ENCODE measurements at regions of chr4 and their contacts with region 1.

Region 1: DNA sequence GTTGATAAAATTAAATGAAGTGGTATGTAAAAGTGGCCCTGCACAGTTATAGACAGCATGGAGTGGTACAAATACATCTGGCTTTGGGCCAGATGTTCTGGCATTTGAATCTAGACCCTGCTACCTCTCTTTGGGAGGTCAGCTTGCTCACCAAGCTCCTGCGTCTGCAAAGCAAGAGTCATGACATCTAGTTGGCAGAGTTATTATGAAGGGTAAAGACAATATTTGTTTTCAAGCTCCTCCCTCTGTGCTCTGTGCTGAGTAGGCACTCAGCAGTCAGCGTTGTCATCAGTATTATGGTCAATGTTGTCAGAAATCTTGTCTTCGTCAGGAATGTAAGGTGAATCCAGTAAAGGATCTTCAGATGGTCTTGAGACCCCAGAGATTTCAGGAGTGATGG is 55.8 kb downstream of the CCNI start:
- DNase-seq: no peak
- H3K4me3 ChIP-seq: no peak overlapping the region
- H3K27ac ChIP-seq: no peak overlapping the region
- H3K4me1 ChIP-seq: peaks cover 1 to 23% (median 9%) of the 10 kb centered on the region in 4 experiments; a peak in 5 of 7 replicates
- H3K27me3 ChIP-seq: no peaks in the 10 kb centered on the region
- CTCF ChIP-seq: no peak
- EP300 ChIP-seq: no peak
- POLR2A ChIP-seq: no peak
- RAD21 ChIP-seq: no peak

Region 2: DNA sequence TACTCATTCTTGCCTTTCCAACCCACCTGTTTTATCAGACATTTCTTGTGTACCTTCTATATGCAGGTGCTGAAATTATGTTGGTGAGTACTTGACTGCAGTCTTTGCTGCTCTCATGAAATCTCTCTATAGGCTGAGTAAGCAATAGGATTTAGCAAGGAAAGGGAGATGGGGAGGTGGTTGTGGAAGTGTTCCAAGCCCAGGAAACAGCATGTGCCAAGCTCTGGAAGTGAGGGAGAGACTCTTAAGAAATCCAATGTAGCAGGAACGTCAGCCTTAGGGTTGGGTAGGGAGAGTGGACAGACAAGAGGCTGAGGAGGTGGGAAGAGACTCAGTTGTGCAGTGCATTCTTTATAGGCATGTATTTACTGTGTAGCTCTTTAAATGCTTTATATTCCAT is 64.8 kb before region 1 on chr4:
- CTCF ChIA-PET with region 1: no interaction called
- POLR2A ChIA-PET with region 1: no interaction called
- DNase-seq: no peak
- H3K4me3 ChIP-seq: no peak overlapping the region
- H3K27ac ChIP-seq: no peak overlapping the region
- H3K4me1 ChIP-seq: peaks cover 0 to 3% (median 0%) of the 10 kb centered on the region in 4 experiments; a peak in 1 of 7 replicates
- H3K27me3 ChIP-seq: no peaks in the 10 kb centered on the region; a peak in 1 of 7 replicates
- CTCF ChIP-seq: no peak
- EP300 ChIP-seq: no peak
- POLR2A ChIP-seq: no peak
- RAD21 ChIP-seq: no peak

Region 3: GRCh38 chr4:76993787-76994641 is 26.0 kb before region 1 on chr4:
- CTCF ChIA-PET with region 1: no interaction called
- POLR2A ChIA-PET with region 1: no interaction called
- DNase-seq: no peak
- H3K4me3 ChIP-seq: no peak overlapping the region
- H3K27ac ChIP-seq: no peak overlapping the region
- H3K4me1 ChIP-seq: peaks cover 0 to 16% (median 7%) of the 10 kb centered on the region in 4 experiments; a peak in 3 of 7 replicates
- H3K27me3 ChIP-seq: no peaks in the 10 kb centered on the region
- CTCF ChIP-seq: no peak
- EP300 ChIP-seq: no peak
- POLR2A ChIP-seq: no peak
- RAD21 ChIP-seq: no peak

Region 4: GRCh38 chr4:77036206-77036605 is 16.2 kb after region 1 on chr4:
- CTCF ChIA-PET with region 1: interaction called, 10 read pairs
- POLR2A ChIA-PET with region 1: no interaction called
- DNase-seq: no peak
- H3K4me3 ChIP-seq: no peak overlapping the region
- H3K27ac ChIP-seq: no peak overlapping the region
- H3K4me1 ChIP-seq: no peaks in the 10 kb centered on the region
- H3K27me3 ChIP-seq: no peaks in the 10 kb centered on the region
- CTCF ChIP-seq: no peak
- EP300 ChIP-seq: no peak
- POLR2A ChIP-seq: no peak
- RAD21 ChIP-seq: no peak

Region 5: DNA sequence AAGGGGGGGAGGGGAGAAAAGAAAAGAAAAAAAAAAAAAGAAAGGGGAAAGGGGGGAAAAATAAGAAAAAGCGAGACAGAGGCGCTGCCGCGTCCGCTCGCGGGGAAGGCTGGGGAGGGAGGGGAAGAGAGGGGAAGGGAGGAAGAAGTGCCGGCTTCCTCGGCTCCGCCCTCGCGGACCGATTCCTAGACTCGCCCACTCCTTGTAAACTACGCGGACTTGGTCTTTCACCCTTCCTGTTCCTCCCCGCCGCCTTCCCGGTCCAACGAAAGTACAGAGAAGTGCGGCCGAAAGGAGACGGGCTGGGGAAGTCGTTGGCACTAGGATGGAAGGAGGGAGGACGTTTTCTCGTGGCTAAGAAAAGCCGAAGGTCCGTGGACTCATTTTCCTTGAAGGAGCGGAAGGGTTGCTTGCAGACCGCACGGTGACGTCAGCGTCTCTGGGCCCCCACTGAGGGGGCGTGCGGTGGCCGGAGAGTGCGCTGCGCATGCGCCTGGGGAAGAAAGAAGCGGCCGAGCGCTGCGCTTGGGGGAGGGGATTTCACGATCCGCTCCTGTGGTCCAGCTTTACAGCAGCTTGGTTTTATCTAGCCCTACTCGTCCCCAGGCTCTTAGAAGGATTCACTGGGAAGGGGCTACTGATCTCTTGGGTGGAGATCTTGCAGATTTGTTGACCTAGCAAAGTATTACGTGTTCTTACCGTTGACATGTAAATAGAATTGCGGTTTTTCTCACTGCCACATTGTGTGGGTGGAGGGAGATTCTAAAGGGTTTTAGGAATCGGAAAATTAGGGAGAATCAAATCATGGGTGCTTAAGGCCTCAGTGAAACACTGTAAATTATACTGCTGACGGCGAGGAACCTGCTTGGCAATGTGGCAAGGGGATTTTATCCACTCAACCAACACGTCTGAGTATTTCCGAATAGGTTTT is 56.1 kb after region 1 on chr4 and contains the start of gene CCNI:
- CTCF ChIA-PET with region 1: no interaction called
- POLR2A ChIA-PET with region 1: no interaction called
- DNase-seq: peak; percentile 92 to 97
- H3K4me3 ChIP-seq: peak within 1 kb of the TSS; percentile 79 to 96 (median 90)
- H3K27ac ChIP-seq: peak within 1 kb of the TSS; percentile 100
- H3K4me1 ChIP-seq: peaks cover 0 to 7% (median 3%) of the 10 kb centered on the region in 4 experiments; a peak in 3 of 7 replicates
- H3K27me3 ChIP-seq: no peaks in the 10 kb centered on the region
- CTCF ChIP-seq: no peak
- EP300 ChIP-seq: no peak
- POLR2A ChIP-seq: peak; percentile 52 to 90
- RAD21 ChIP-seq: no peak
- total RNA-seq, gene CCNI: 223 and 234 TPM in 2 replicates

Region 6: DNA sequence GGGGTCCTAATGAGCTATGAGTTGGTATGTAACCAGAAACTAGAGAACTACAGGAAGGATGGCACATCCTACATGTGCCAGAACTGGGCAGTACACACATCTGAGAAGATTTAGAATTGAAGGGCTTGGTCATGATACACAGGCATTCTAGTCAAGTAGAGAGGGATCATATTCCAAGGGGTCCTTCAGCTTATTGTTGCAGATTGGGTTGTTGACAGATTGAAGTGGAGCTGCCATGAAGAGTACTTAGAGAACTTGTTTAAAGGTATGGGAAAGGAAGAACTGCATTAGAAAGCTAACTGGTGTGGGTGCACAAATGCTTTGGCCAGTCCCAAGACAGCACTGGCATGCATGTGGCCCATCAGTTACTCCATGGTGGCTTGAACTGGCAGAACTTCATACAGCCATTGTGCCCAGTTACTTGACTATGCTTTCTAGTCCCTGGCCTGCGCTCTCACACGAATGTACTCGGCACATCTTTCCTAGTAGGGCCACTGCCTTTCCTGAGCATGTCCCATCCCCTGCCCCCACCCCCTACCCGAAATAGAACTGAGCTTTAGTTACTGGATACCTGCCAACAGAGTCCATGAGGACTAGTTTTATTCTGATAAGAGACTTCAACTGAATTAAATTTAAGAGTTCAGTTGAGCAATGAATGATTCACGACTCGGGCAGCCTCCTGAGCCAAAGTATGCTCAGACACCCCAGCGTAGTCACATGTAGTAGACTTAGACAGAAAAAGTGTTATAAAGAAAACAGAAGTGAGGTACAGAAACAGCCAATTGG is 201.0 kb after region 1 on chr4:
- CTCF ChIA-PET with region 1: no interaction called
- POLR2A ChIA-PET with region 1: no interaction called
- DNase-seq: no peak
- H3K4me3 ChIP-seq: no peak overlapping the region
- H3K27ac ChIP-seq: no peak overlapping the region
- H3K4me1 ChIP-seq: no peaks in the 10 kb centered on the region
- H3K27me3 ChIP-seq: no peaks in the 10 kb centered on the region; a peak in 1 of 7 replicates
- CTCF ChIP-seq: no peak
- EP300 ChIP-seq: no peak
- POLR2A ChIP-seq: no peak
- RAD21 ChIP-seq: no peak

Measured in H1 (cell line).